ENCODE measurements at regions of chr2 and their contacts with region 1.

Region 1: DNA sequence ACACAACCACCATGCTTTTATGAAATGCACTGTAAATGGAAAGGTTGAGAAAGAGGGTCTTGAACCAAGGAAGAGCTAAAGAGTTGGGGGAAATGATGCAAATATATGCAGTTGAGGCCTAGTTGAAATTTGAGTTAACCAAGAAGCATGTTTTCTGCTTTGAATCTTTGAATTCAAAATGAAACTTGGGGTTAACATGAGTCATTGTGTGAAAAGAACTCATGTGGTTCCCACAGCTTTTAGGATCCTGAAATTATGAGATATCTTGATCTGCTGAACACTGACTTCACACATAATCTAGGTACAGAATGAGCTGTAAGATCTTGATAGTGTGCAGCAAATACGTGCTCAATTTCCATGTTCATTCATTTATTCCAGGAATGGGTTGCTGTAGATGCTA is 422.9 kb upstream of the TRIB2 start:
- DNase-seq: no peak
- ATAC-seq: peak; percentile 93
- H3K4me3 Mint-ChIP-seq: no peak overlapping the region
- H3K27ac Mint-ChIP-seq: peak overlapping the region; percentile 66
- H3K4me1 Mint-ChIP-seq: peaks cover 46% of the 10 kb centered on the region
- H3K27me3 Mint-ChIP-seq: peaks cover 27% of the 10 kb centered on the region

Region 2: GRCh38 chr2:11743846-11744553 is 549.9 kb before region 1 on chr2:
- CTCF ChIA-PET with region 1: no interaction called
- POLR2A ChIA-PET with region 1: no interaction called
- intact Hi-C with region 1: loop called in 1 of 2 experiments (anchors 5 kb)
- DNase-seq: peak; percentile 90
- ATAC-seq: peak; percentile 83
- H3K4me3 Mint-ChIP-seq: peak overlapping the region; percentile 34
- H3K27ac Mint-ChIP-seq: peak overlapping the region; percentile 73
- H3K4me1 Mint-ChIP-seq: peaks cover 54% of the 10 kb centered on the region
- H3K27me3 Mint-ChIP-seq: no peaks in the 10 kb centered on the region

Region 3: GRCh38 chr2:12005886-12006681 is 287.8 kb before region 1 on chr2:
- CTCF ChIA-PET with region 1: no interaction called
- POLR2A ChIA-PET with region 1: interaction called, 3 read pairs
- intact Hi-C with region 1: loop called (anchors 5 kb)
- DNase-seq: peak; percentile 85
- ATAC-seq: peak; percentile 94
- H3K4me3 Mint-ChIP-seq: no peak overlapping the region
- H3K27ac Mint-ChIP-seq: no peak overlapping the region
- H3K4me1 Mint-ChIP-seq: peaks cover 16% of the 10 kb centered on the region
- H3K27me3 Mint-ChIP-seq: peaks cover 59% of the 10 kb centered on the region

Region 4: DNA sequence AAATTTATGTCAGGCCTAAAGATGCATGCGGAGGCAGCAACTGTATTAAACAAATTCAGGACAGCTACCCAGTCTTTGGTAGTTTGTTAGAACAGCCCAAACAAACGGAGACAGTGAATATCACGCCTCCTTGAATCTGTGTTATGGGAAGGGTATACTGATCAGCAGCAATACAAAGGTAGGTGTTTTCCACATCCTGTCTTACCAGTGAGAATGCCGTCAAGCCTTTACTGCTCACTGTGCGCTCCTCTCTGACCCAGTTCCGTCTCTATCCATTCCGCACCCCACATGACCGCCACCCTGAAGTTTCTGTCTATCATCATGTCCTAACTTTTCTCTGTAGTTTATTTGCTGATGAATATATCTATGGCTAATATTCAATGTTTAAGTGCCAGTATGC is 74.1 kb before region 1 on chr2:
- CTCF ChIA-PET with region 1: no interaction called
- POLR2A ChIA-PET with region 1: no interaction called
- intact Hi-C with region 1: loop called in 1 of 2 experiments (anchors 2 kb)
- DNase-seq: no peak
- ATAC-seq: no peak
- H3K4me3 Mint-ChIP-seq: no peak overlapping the region
- H3K27ac Mint-ChIP-seq: no peak overlapping the region
- H3K4me1 Mint-ChIP-seq: no peaks in the 10 kb centered on the region
- H3K27me3 Mint-ChIP-seq: no peaks in the 10 kb centered on the region

Region 5: DNA sequence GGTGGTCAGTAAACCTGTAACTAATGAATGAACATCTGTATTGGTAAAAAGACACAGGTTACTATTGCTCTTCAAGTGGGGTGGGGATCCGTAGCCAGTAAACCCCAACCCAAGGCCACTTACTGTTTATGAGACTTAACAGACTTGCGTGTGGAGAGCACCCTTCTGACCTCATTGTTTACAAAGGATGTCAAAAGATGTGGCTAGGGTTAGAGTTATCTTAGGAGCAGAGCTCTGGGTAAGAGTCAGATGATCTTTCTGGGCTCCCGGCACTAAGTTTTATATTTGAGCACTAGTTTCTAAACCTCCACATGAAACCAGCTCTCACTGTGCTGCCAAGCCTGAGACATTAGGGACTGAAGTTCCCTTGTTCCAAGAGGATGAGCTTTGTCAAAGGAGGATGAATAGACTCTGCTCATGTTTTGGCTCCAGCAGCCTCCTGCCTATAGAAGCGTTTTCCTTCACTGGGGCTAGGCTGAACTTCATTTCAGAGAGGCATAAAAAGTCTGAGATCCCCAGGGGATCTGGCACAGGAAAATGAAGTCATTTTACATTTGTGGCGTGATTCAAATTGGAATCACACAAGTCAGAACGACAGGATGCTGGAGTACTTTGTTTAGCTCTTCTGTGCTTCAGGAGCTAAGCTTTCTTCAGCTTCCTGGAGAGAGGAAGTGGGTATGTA is 19.7 kb after region 1 on chr2:
- CTCF ChIA-PET with region 1: no interaction called
- POLR2A ChIA-PET with region 1: no interaction called
- intact Hi-C with region 1: no loop called
- DNase-seq: no peak
- ATAC-seq: no peak
- H3K4me3 Mint-ChIP-seq: no peak overlapping the region
- H3K27ac Mint-ChIP-seq: no peak overlapping the region
- H3K4me1 Mint-ChIP-seq: peaks cover 32% of the 10 kb centered on the region
- H3K27me3 Mint-ChIP-seq: no peaks in the 10 kb centered on the region

Region 6: DNA sequence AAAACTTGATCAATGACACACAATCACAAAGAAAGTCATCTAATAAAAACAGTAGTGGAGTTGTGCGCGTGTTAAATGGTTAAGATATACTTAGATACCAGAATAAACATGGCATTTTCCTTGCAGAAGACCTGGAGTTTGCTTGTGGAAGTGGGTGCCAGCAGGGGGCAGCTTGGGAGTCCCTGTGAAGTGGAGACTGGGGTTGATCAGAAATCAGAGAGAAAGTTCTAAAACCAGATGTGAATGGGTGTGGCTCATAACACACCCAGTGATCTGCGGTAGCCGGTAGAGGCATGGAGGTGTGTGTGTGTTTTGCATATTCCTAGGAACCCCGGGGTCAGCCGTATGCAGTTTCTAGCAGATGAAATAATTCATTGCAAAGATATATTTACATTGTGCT is 122.7 kb after region 1 on chr2:
- CTCF ChIA-PET with region 1: no interaction called
- POLR2A ChIA-PET with region 1: no interaction called
- intact Hi-C with region 1: loop called in 1 of 2 experiments (anchors 5 kb)
- DNase-seq: peak; percentile 69
- ATAC-seq: peak; percentile 43
- H3K4me3 Mint-ChIP-seq: no peak overlapping the region
- H3K27ac Mint-ChIP-seq: no peak overlapping the region
- H3K4me1 Mint-ChIP-seq: peaks cover 36% of the 10 kb centered on the region
- H3K27me3 Mint-ChIP-seq: no peaks in the 10 kb centered on the region

Region 7: DNA sequence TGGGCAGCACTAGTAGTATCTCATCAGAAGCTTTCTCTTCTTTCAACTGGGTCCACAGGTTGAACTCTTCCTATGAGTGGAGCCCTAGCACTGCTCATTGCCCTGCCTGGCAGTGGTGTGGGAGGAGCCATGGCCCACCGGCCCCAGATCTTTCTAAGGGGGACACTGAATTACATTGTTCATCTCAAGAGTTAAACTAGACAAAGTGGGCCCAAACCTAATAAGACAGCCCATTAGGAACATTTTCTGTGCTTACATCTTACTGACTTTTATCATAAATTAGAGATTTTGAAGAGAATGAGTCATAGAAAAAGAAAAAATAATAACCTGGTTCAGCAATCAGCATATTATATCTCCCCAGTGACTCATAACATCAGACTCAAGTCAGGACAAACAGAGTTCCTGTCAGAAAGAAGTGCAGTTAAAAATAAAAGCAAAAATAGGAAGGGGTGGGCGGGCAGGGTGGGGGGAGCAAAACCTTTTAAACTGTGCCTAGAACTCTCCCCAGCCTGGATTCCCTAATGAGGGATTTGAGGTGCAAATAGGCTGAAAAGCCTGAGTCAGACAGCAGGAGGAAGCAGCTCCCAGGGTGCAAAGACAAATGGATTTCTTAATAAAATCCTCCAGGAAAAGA is 261.3 kb after region 1 on chr2:
- CTCF ChIA-PET with region 1: no interaction called
- POLR2A ChIA-PET with region 1: no interaction called
- intact Hi-C with region 1: loop called in 1 of 2 experiments (anchors 1 kb)
- DNase-seq: peak; percentile 55
- ATAC-seq: peak; percentile 92
- H3K4me3 Mint-ChIP-seq: peak overlapping the region; percentile 33
- H3K27ac Mint-ChIP-seq: peak overlapping the region; percentile 75
- H3K4me1 Mint-ChIP-seq: peaks cover 36% of the 10 kb centered on the region
- H3K27me3 Mint-ChIP-seq: no peaks in the 10 kb centered on the region

Region 8: GRCh38 chr2:12948961-12949353 is 655.1 kb after region 1 on chr2:
- CTCF ChIA-PET with region 1: no interaction called
- POLR2A ChIA-PET with region 1: no interaction called
- intact Hi-C with region 1: loop called in 1 of 2 experiments (anchors 10 kb)
- DNase-seq: peak; percentile 46
- ATAC-seq: peak; percentile 84
- H3K4me3 Mint-ChIP-seq: no peak overlapping the region
- H3K27ac Mint-ChIP-seq: peak overlapping the region; percentile 26
- H3K4me1 Mint-ChIP-seq: peaks cover 10% of the 10 kb centered on the region
- H3K27me3 Mint-ChIP-seq: peaks cover 17% of the 10 kb centered on the region